Posterior cingulate gyrus (tissue), 11 donors: ENCODE measurements at regions of chr1 and their contacts with region 1.

Region 1: GRCh38 chr1:216750012-216750627 is 26.9 kb upstream of the ESRRG start:
- DNase-seq: peak in 6 of 10 donors; percentile 27 to 81 (median 51)

Region 2: GRCh38 chr1:216830424-216831210 is 80.5 kb after region 1 on chr1:
- intact Hi-C with region 1: no loop called
- DNase-seq: no peak

Region 3: GRCh38 chr1:217089361-217090014 is 339.4 kb after region 1 on chr1:
- intact Hi-C with region 1: loop called (anchors 10 kb)
- DNase-seq: peak in 9 of 10 donors; percentile 30 to 93 (median 57)

Region 4: GRCh38 chr1:217333939-217334338 is 583.8 kb after region 1 on chr1:
- intact Hi-C with region 1: loop called (anchors 10 kb)
- DNase-seq: peak in 4 of 10 donors; percentile 8 to 40 (median 22)

Region 5: DNA sequence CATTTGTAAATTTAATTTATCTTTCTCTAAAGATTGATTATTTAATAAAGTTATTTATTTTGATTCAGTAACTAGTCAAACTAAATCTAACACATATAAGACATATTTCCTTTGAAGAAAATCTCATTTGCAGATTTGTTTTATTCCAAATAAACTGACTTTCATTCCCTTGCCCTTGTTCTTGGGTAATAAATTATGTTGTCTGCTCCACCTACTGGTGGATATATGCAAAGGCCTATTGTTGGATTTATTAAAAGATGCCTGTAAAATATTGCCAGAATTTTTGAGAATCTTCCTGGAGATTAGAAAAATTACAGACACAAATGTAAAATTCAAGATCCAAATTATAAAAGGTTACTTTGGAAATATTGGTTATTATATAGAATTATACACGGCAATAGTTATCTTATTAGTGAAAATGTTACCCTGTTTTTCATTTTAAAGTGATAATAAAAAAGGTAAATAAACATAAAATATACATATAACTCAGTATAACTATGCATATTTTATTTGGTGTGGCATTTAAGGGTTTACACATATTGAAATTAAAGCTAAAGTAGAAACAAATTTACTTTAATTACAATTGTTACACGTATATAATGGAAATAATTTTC is 997.1 kb after region 1 on chr1:
- intact Hi-C with region 1: loop called (anchors 5 kb)
- DNase-seq: no peak

Region 6: DNA sequence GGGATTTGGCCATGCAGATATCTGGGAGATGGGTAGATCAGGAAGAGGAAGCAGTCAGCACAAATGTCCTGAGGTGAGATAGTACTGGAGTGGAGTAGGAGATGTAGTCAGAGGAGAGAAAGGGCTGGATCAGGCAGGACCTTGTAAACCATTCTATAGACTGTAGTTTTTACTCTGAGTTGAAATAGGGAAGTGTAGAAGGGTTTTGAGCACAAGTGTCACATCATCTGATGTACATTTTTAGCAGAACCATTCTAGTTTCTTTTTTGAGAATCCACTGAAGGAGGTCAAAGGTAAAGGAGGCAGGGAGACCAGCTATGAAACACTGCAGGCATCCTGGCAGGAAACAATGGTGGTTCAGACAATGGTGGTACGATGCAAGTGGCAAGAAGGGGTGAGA is 1340.3 kb after region 1 on chr1:
- intact Hi-C with region 1: no loop called
- DNase-seq: no peak